ENCODE measurements at regions of chr11 and their contacts with region 1.

Region 1: GRCh38 chr11:63023841-63024648 is 8.4 kb upstream of the SLC22A8 start:
- H3K4me3 ChIP-seq: no peak overlapping the region
- H3K27ac ChIP-seq: no peak overlapping the region
- H3K4me1 ChIP-seq: no peaks in the 10 kb centered on the region; the same call in 1 of the 2 replicates
- CTCF ChIP-seq: peak; percentile 74

Region 2: DNA sequence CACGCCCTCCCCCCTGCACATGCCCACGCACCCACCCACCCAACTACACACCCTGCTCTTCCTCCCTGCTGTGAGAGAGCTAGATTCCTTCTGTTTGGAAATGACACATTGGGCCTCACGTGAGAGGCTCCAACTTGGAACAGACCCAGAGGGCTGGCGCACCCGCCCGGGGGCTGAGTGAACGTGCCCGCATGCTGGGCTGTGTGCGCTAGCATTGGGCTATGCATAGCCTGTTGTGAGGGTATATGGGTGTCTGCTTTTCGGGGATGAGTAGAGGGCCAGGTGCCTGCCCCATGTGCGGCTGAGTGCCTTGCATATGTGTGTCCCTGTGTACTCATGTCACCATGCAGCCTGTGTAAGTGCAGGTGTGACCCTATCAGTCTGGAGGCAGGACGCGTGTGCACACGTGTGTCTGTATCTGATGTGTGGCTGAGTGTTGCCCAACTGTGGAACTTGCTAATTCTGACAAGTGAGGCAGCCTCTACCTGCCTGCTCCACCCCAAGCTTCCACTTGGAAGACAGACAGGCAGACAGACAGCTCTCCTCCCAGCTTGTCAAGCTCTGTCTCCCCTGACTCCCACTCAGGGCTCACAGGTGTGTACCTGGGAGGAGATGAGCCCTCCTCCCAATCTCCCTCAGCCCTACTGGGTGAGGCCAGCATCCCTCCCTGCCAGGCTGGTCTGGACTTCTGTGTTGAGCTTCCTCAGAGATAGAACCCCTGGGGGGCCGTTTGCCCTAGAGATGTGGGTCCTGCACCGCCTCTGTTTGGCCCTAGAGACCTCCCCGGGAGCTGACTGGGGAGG is 102.1 kb before region 1 on chr11:
- CTCF ChIA-PET with region 1: interaction called, 33 read pairs
- POLR2A ChIA-PET with region 1: interaction called, 7 read pairs
- H3K4me3 ChIP-seq: no peak overlapping the region
- H3K27ac ChIP-seq: no peak overlapping the region
- H3K4me1 ChIP-seq: peaks cover 4% of the 10 kb centered on the region; the same call in 1 of the 2 replicates
- CTCF ChIP-seq: no peak

Region 3: GRCh38 chr11:62999649-63000048 is 24.4 kb before region 1 on chr11:
- CTCF ChIA-PET with region 1: interaction called, 13 read pairs
- POLR2A ChIA-PET with region 1: no interaction called
- H3K4me3 ChIP-seq: no peak overlapping the region
- H3K27ac ChIP-seq: no peak overlapping the region
- H3K4me1 ChIP-seq: no peaks in the 10 kb centered on the region
- CTCF ChIP-seq: no peak

Region 4: DNA sequence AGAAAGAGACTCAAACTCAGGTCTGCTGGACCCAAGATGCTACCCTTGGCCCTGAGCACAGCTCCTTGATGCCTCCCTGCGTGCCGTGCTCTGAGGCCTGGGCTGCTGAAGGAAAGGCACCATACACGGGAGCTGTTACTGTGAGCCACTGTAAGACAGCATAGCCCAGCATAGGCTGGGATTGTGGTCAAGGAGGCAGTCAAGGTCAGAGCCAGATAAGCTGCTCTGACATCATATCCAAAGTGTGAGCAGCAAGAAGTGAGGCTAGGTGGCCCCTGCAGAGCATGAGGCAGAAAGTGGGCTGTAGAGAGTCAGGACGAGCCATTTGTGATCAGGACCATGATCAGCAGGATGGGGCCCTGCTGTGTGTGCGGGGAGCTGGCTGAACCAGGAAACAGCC is 16.1 kb before region 1 on chr11:
- CTCF ChIA-PET with region 1: interaction called, 21 read pairs
- POLR2A ChIA-PET with region 1: no interaction called
- H3K4me3 ChIP-seq: no peak overlapping the region
- H3K27ac ChIP-seq: no peak overlapping the region
- H3K4me1 ChIP-seq: no peaks in the 10 kb centered on the region
- CTCF ChIP-seq: no peak

Region 5: DNA sequence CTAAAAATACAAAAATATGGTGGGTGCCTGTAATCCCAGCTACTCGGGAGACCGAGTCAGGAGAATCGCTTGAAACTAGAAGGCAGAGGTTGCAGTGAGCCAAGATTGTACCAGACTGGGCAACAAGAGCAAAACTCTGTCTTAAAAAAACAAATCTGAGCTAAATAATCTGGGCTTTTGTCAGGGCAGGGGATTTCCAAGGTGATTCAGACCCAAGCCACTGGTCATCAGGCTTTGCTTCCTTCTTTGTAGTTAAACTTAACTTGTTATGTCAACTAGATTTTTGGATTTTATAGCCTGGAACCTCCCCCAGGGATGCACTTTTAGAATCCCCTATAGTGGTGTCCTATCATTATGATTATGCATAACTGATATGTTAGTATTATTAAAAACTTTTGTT is 18.6 kb after region 1 on chr11:
- CTCF ChIA-PET with region 1: interaction called, 12 read pairs
- POLR2A ChIA-PET with region 1: no interaction called
- H3K4me3 ChIP-seq: no peak overlapping the region
- H3K27ac ChIP-seq: no peak overlapping the region
- H3K4me1 ChIP-seq: no peaks in the 10 kb centered on the region
- CTCF ChIP-seq: no peak